B cell (primary cell): ENCODE measurements at regions of chr7 and their contacts with region 1.

Region 1: DNA sequence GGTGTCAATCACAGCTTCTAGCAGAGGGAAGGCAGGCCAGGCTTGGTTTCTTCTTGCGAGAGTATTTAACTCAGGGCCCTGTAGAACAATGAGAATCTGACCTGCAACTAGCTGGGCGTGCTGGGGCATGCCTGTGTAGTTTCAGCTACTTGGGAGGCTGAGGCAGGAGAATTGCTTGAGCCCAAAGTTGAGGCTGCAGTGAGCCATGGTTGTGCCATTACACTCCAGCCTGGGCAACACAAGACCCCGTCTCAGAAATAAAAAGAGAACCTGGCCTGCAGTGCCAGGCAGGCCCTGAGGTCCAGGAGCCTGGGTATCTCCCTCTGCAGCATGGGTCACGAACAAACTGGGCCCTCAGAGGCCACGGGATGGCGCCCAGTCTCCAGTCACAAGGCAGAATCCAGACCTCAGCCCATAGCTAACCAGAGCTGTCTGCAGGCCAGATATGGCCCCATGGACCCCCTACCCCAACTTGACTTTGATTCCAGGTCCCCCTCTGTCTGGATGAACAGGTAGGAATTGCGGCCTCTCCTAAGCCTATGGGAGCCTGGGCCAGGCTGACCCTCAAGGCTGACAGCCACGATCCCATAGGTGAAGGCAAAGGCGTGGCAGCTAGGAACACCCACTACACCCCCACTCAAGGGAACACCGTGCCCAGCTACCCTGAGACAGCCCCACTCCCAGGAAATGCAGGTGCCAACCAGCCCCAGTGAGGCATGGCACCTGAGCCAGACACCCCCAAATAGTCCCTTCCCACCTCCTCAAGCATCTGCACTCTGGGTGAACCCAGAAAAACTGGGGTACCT is 102.7 kb upstream of the TNRC18 start:
- DNase-seq: peak; percentile 52
- ATAC-seq: no peak
- H3K4me3 ChIP-seq: peak overlapping the region in 1 of 5 experiments; percentile 82
- H3K4me3 Mint-ChIP-seq: peak overlapping the region; percentile 98
- H3K27ac ChIP-seq: peak overlapping the region; percentile 37 to 51
- H3K27ac Mint-ChIP-seq: peak overlapping the region; percentile 88
- H3K4me1 ChIP-seq: peaks cover 24 to 40% of the 10 kb centered on the region in 2 donors
- H3K4me1 Mint-ChIP-seq: peaks cover 56% of the 10 kb centered on the region
- H3K27me3 ChIP-seq: no peaks in the 10 kb centered on the region
- H3K27me3 Mint-ChIP-seq: no peaks in the 10 kb centered on the region
- CTCF ChIP-seq: no peak

Region 2: DNA sequence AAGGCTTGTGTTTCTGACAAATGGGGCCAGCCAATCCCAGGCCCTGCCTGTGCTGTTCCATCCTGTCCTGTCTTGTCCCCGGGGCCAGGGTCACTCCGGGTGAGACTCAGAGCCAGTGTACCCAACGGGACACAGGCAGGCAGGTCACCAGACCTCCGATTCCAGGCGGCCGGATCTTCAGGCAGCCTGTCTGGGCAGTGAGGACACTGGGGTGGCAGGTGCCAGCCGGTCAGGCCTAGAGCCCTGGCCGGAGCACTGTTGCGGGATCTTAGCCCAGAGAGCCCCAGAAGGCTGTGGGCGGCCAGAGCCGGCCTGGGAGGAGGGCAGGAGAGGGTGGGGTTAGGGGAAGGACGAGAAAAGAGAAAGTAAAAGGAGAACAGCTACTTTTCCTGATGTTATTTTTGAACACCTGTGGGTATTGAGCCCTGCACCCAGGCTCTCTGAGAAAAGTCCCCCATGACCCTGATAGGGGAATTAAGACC is 31.7 kb after region 1 on chr7:
- CTCF ChIA-PET with region 1: interaction called, 3 read pairs
- POLR2A ChIA-PET with region 1: interaction called, 22 read pairs
- intact Hi-C with region 1: no loop called
- DNase-seq: peak; percentile 77
- ATAC-seq: peak; percentile 18
- H3K4me3 ChIP-seq: peak overlapping the region; percentile 41 to 67 (median 58)
- H3K4me3 Mint-ChIP-seq: peak overlapping the region; percentile 92
- H3K27ac ChIP-seq: peak overlapping the region; percentile 92 to 93
- H3K27ac Mint-ChIP-seq: peak overlapping the region; percentile 96
- H3K4me1 ChIP-seq: peaks cover 47 to 64% of the 10 kb centered on the region in 2 donors
- H3K4me1 Mint-ChIP-seq: peaks cover 52% of the 10 kb centered on the region
- H3K27me3 ChIP-seq: no peaks in the 10 kb centered on the region
- H3K27me3 Mint-ChIP-seq: no peaks in the 10 kb centered on the region
- CTCF ChIP-seq: no peak